ENCODE measurements at regions of chr16 and their contacts with region 1.

Region 1: GRCh38 chr16:84672276-84673202 is 24.2 kb downstream of the KLHL36 start:
- DNase-seq: peak; percentile 29
- H3K4me3 ChIP-seq: no peak overlapping the region
- H3K27ac ChIP-seq: no peak overlapping the region
- H3K27me3 ChIP-seq: no peaks in the 10 kb centered on the region
- CTCF ChIP-seq: peak; percentile 89

Region 2: DNA sequence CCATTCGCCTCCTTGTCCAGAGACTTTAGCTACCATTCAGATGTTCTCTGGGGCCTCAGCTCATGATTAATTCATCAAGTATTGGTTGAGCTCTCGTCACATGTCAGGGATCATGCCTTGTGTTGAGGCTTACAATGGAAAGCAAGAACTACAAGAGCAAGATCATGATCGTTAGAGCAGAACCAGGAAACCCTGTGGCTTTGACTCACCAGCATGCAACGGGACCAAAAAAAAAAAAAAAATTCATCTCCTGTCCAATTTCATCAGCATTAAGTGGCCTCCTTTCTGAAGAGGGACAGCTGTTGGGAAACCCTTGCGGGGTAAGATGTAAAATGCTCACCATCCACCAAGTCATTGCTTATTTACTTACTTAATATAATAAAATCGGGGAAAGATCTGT is 15.2 kb after region 1 on chr16:
- CTCF ChIA-PET with region 1: interaction called, 60 read pairs
- POLR2A ChIA-PET with region 1: interaction called, 7 read pairs
- DNase-seq: peak; percentile 67
- H3K4me3 ChIP-seq: no peak overlapping the region
- H3K27ac ChIP-seq: peak overlapping the region; percentile 86
- H3K27me3 ChIP-seq: no peaks in the 10 kb centered on the region
- CTCF ChIP-seq: no peak

Region 3: DNA sequence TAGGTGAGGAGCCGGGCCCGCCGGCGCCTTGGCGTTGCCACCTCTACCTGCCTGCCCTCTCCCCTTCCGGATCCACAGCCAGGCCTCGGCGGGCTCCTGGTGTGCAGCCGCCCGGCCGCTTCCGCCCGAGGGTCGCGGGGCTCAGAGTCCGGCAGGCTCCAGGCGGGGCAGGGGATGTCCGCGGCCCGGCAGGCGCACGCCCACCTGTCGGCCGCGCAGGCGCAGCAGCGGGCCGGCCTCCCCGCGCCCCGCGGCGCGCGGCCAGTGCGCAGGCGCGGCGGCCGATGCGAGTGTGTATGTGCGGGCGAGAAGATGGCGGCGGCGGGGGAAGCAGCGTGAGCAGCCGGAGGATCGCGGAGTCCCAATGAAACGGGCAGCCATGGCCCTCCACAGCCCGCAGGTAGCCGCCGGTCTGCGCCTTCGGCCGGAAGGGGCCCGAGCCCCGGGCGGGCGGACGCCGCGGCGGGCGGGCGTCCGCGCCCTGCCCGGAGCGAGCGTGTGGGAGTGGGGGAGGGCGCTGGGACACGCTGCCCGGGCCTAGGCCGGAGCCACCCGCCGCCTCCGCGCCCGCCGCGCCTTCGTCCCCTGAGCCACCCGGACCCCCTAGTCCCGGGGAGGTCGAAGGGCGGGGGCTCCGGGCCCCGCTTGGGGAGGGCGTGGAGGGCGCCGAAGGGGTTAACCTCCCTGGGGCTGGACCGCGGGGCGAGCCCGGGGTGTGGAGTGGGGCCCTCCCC is 27.3 kb after region 1 on chr16 and contains the start of gene USP10:
- CTCF ChIA-PET with region 1: interaction called, 20 read pairs
- POLR2A ChIA-PET with region 1: no interaction called
- DNase-seq: no peak
- H3K4me3 ChIP-seq: peak within 1 kb of the TSS; percentile 84
- H3K27ac ChIP-seq: no peak within 1 kb of the TSS
- H3K27me3 ChIP-seq: no peaks in the 10 kb centered on the region
- CTCF ChIP-seq: no peak
- polyA plus RNA-seq, gene USP10: 54.9 and 79.3 TPM in 2 replicates

Region 4: GRCh38 chr16:84732674-84733352 is 60.3 kb after region 1 on chr16:
- CTCF ChIA-PET with region 1: interaction called, 20 read pairs
- POLR2A ChIA-PET with region 1: no interaction called
- DNase-seq: no peak
- H3K4me3 ChIP-seq: no peak overlapping the region
- H3K27ac ChIP-seq: no peak overlapping the region
- H3K27me3 ChIP-seq: no peaks in the 10 kb centered on the region
- CTCF ChIP-seq: no peak

Region 5: GRCh38 chr16:84738255-84739038 is 65.9 kb after region 1 on chr16:
- CTCF ChIA-PET with region 1: interaction called, 20 read pairs
- POLR2A ChIA-PET with region 1: no interaction called
- DNase-seq: peak; percentile 26
- H3K4me3 ChIP-seq: no peak overlapping the region
- H3K27ac ChIP-seq: no peak overlapping the region
- H3K27me3 ChIP-seq: no peaks in the 10 kb centered on the region
- CTCF ChIP-seq: peak; percentile 84